ENCODE measurements at regions of chr20 and their contacts with region 1.

Region 1: DNA sequence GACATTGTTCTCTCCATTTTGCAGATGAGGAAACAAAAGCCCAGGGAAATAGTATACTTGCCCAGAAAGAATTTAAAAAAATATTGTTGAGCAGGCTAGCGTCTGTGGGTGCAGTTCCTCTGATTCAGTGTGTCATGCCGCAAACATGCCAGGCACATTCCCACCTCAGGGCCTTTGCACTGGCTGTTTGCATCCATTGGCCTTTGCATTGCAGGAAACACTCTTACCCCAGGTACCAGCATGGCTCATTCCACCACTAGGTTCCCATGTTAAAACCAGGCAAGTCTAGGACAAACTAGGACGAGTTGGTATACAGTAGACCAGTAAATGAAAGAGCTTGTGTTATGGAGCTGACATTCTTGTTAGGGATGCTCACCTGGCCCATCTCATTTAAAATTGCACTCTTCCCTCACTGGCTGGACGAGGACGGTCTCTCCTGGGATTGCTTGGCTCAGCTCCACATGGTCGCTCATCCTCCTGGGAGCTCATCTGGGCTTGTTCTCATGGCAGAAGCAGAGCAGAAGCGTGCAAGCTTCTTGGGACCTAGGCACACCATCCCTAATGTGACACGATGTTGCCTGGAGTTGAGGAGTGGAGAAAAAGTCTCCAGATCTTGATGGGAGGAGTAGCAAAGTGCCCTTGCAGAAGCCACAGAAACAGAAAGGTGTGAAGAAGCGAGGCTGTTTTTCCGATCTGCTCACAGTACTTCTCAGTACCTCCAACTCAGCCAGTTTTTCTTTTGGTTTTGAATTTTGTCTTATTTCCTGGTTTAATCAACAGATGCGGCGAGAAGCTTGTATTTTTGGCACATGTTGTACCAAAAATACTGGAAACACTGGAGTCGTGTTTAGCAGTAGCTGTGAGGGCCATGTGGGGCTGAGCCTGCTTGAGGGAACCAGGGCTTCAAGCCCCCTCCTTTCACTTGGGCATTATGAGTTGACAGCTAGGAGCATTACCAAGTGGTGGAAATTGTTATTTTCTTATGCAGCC is 13.9 kb downstream of the ZNF831 start:
- DNase-seq: peak in 5 of 9 experiments; percentile 46 to 83 (median 55)
- ATAC-seq: peak; percentile 76
- H3K4me3 ChIP-seq: peak overlapping the region in 1 of 2 experiments; percentile 26
- H3K4me3 Mint-ChIP-seq: peak overlapping the region; percentile 69
- H3K27ac ChIP-seq: peak overlapping the region; percentile 64 to 92
- H3K27ac Mint-ChIP-seq: peak overlapping the region; percentile 94
- H3K4me1 ChIP-seq: peaks cover 75% of the 10 kb centered on the region
- H3K4me1 Mint-ChIP-seq: peaks cover 94% of the 10 kb centered on the region
- H3K27me3 ChIP-seq: no peaks in the 10 kb centered on the region
- H3K27me3 Mint-ChIP-seq: no peaks in the 10 kb centered on the region
- CTCF ChIP-seq: no peak

Region 2: GRCh38 chr20:59042796-59043660 is 134.5 kb before region 1 on chr20:
- CTCF ChIA-PET with region 1: no interaction called
- POLR2A ChIA-PET with region 1: no interaction called
- intact Hi-C with region 1: no loop called
- DNase-seq: peak; percentile 88 to 97 (median 94)
- ATAC-seq: peak; percentile 92
- H3K4me3 ChIP-seq: peak overlapping the region; percentile 67 to 94
- H3K4me3 Mint-ChIP-seq: peak overlapping the region; percentile 90
- H3K27ac ChIP-seq: peak overlapping the region; percentile 74 to 92
- H3K27ac Mint-ChIP-seq: peak overlapping the region; percentile 93
- H3K4me1 ChIP-seq: peaks cover 48% of the 10 kb centered on the region
- H3K4me1 Mint-ChIP-seq: peaks cover 52% of the 10 kb centered on the region
- H3K27me3 ChIP-seq: no peaks in the 10 kb centered on the region
- H3K27me3 Mint-ChIP-seq: no peaks in the 10 kb centered on the region
- CTCF ChIP-seq: no peak

Region 3: GRCh38 chr20:59141787-59142581 is 35.6 kb before region 1 on chr20:
- CTCF ChIA-PET with region 1: interaction called, 3 read pairs
- POLR2A ChIA-PET with region 1: interaction called, 4 read pairs
- intact Hi-C with region 1: loop called in 1 of 2 experiments (anchors 5 kb)
- DNase-seq: peak in 1 of 9 experiments; percentile 30
- ATAC-seq: no peak
- H3K4me3 ChIP-seq: no peak overlapping the region
- H3K4me3 Mint-ChIP-seq: no peak overlapping the region
- H3K27ac ChIP-seq: no peak overlapping the region
- H3K27ac Mint-ChIP-seq: no peak overlapping the region
- H3K4me1 ChIP-seq: peaks cover 44% of the 10 kb centered on the region
- H3K4me1 Mint-ChIP-seq: peaks cover 57% of the 10 kb centered on the region
- H3K27me3 ChIP-seq: no peaks in the 10 kb centered on the region
- H3K27me3 Mint-ChIP-seq: no peaks in the 10 kb centered on the region
- CTCF ChIP-seq: no peak

Region 4: DNA sequence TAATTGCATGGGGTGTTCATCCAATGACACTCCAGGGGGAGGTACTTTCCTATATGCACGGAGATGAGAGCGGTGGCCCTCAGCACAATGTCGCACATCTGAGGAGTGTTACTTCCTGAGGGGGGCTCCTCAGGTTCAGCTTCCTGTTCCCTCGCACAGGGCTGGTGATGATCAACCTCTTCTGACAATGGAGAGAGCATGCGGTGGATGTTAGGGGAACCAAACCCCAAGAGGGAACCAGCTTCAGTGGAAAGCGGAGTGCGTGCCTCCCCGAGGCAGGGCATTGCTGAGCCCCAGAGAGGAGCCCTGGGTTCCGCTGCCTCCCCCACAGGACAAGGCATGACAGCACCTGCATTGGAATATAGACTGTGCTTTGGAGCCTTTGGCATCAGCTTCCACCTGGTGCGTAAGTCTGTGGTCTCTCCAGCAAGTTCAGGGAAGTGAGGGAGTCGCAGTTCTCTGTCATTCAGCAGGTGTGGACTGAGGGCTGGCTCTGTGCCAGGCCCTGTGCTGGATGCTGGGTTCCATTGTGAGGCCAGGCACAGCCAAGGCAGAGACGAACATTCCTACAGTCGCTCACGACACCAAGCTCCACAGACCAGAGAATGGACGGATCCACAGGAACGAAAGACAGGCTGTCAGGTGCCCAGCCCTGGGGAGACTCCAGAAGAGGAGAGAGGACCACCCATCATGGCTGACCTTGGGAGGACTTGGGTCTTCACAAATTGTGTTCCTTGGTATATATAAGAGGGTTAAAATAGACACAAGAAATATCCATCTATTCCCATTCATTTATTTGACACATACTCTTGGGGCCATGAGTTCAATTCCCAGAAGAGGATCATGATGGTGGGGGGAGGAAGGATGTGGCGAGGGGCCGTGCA is 17.8 kb before region 1 on chr20:
- CTCF ChIA-PET with region 1: interaction called, 8 read pairs
- POLR2A ChIA-PET with region 1: interaction called, 15 read pairs
- intact Hi-C with region 1: loop called in 1 of 2 experiments (anchors 2 kb)
- DNase-seq: peak; percentile 56 to 97 (median 79)
- ATAC-seq: peak; percentile 86
- H3K4me3 ChIP-seq: peak overlapping the region; percentile 47 to 67
- H3K4me3 Mint-ChIP-seq: peak overlapping the region; percentile 83
- H3K27ac ChIP-seq: peak overlapping the region; percentile 79 to 93
- H3K27ac Mint-ChIP-seq: peak overlapping the region; percentile 98
- H3K4me1 ChIP-seq: peaks cover 69% of the 10 kb centered on the region
- H3K4me1 Mint-ChIP-seq: peaks cover 91% of the 10 kb centered on the region
- H3K27me3 ChIP-seq: no peaks in the 10 kb centered on the region
- H3K27me3 Mint-ChIP-seq: no peaks in the 10 kb centered on the region
- CTCF ChIP-seq: peak; percentile 23

Measured in CD8-positive, alpha-beta T cell (primary cell).